ENCODE measurements at regions of chr2 and their contacts with region 1.

Region 1: GRCh38 chr2:41970988-41971660 is 76.7 kb upstream of the PKDCC start:
- DNase-seq: no peak
- ATAC-seq: no peak

Region 2: DNA sequence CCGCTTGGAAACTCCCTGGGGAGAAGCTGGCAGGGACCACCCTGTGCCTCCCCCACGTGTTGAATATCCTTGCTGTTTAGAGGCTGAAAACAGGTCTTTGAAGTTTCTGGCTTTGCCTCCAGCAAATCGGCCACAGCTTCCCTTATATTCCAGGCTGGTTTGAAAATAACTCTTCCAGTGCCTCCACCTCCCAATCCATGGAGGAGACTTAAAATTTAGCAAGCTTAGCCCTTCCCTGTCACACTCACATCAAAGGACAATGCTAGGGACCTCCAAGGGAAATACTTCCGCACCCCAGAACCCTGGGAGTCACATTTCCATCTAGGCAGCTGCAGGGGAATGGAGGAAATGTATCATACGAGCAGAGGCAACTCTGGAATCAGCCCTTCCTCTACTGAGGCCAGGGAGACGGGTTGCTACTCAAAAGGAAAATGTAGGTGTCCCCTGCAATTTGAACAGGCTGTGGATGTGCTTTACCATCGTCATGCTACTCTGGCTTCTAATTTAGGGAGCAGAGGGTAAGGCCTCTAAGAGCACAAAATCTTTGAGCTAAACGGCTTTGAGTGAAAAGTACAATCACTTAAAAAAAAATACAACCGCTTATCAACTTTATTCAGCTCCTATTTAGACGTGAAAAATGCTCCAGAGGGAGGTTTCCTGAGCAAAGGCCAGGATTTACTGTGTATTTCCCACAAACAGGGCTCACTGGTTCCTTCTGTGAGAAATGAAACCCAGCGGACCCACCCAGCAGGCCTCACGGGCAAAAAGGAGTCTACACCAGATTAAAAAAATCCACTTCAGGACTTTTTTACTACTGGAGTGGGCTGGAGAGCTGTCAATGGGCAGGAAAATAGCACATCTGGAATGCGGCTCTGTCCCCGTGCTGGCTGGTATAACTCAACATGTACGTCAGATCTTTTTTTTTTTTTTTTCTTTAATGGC is 27.3 kb after region 1 on chr2:
- intact Hi-C with region 1: no loop called
- DNase-seq: no peak
- ATAC-seq: peak; percentile 75

Region 3: DNA sequence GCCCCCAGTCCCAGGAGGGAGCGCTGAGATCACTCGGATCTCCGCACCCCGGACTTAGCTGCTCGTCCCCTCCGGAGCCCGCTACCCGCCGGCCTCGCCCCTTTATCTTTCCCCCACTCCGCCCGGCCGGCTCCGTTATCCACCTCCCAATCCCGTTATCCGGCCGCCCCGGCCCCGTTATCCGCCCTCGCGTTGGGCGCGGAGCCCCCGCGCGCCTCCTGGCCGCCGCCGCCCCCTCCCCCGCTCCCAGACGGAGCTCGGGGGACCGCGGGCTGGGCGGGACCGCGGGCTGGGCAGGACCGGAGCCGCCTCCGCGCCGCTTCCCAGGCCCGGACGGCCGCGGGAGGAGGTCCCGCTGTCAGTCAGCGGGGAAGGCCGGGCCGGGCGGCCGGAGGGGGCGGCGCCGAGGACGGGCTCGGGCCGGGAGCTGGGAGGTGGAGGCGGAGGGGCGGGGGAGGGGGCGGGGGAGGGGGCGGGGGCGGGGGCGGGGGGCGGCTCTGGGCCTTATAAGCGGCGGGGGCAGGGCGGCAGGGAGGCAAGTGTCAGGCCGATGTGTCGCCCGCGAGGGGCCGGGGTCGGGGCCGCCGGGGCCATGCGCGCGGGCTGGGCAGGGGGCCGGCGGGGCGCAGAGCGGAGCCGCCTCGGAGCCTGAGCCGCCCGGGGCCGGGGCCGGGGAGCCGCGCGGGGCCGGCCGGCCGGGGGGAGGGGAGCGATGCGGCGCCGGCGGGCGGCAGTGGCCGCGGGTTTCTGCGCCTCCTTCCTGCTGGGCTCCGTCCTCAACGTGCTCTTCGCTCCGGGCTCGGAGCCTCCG is 76.6 kb after region 1 on chr2 and contains the start of gene PKDCC:
- intact Hi-C with region 1: loop called (anchors 10 kb)
- DNase-seq: peak; percentile 91
- ATAC-seq: peak; percentile 75
- total RNA-seq, gene PKDCC: 367 TPM

Region 4: DNA sequence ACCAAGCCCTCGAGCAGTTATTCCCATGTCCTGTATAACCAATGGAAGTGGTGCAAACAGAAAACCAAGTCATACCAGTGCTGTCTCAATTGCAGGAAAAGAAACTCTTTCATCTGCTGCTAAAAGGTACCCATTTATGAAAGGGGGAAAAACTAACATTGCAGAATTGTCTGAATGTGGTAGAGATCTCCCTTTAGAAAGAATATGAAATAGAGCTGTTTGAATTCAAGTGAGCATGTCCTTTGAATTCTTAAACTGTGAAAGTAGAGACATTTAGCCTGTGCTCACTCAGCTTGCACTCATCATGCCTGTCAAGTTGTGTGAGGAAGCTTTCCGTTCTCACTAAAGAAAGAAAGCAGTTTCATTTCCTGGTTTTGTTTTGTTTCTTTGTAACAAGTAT is 285.4 kb after region 1 on chr2:
- intact Hi-C with region 1: no loop called
- DNase-seq: no peak
- ATAC-seq: no peak

Measured in sciatic nerve (tissue), 2 donors.